AG04449 (cell line): ENCODE measurements at regions of chr20 and their contacts with region 1.

Region 1: DNA sequence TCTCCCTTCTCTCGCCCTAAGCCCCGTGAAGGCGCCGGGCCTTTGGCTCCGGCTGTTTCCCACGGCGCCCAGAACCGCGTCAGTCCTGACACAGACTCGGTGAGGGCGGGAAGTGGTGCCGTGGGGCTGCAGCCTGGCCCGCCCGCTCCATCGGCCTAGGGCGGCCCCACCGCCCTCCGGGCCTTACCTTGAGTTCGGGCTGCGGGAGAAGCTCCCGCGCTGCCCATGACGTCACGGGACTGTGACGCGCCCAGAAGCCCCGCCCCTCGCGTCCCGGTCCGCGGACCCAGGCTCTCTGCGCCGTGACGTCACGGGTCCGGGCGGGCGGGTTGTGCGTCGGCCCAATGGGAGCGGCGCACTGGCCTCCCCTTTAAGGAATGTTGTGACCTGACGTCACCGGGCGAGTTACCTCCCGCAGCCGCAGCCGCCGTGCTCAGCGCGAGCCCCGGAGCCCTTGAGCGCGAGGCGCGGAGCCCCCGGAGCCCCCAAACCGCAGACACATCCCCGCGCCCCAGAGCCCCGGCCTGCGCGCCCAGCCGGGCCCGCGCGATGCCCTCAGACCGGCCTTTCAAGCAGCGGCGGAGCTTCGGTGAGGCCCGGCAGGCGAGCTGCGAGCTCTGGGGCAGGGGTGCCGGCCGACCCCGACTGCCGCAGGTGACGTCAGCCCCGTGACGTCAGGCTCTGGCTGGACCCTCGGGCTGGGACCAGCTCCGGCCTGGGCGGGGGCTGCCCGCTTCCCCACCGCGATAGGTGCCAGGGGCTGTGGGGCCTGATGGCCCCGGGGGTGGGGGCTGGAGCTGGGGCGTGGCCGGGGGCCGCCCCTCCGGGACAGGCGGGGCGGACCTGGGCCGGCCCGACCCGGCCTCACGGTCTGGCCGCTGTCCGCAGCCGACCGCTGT is at the start of gene MAP1LC3A:
- DNase-seq: peak; percentile 69
- H3K4me3 ChIP-seq: peak within 1 kb of the TSS; percentile 71
- CTCF ChIP-seq: no peak

Region 2: DNA sequence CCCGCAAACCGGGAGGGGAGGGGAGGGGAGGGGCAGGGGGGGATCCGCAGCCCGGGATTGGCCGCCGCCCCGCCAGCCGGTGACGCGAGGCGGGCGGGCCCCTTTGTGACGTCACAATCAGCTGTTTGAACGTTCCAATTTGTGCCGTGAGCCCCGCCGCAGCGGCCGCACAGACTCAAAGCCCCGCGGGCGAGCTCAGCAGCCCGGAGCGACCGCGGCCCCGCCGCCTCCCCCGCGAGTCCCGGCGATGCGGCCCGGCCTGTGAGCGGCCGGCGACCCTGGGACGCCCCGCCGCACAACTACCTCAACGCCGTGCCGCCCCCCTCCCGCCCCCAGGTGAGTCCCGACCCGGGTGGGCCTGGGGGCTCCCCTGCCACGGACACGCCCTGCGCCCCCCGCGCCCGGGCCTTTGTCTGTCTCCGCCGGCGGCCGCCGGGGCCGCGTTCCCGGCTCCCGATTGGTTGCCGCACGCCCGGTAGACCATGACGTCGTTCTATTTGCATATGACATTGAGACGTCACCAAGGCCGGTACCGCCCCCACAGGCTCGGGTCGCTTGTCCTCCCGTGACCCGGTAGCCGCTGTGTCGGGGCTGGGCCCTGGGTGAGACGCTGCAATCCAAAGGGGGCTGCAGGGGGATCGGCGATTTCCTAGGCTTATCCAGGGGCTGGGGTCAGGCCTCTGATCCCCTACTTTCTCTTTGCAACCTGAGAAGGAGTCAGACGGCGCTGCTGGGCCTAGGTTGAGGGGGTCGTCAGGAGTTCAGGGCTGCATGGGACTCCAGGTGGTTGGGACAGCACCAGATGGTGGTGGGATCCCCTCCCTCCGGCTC is 145.8 kb after region 1 on chr20 and contains the start of gene TP53INP2:
- CTCF ChIA-PET with region 1: interaction called, 17 read pairs
- POLR2A ChIA-PET with region 1: interaction called, 5 read pairs
- DNase-seq: peak; percentile 45
- H3K4me3 ChIP-seq: peak within 1 kb of the TSS; percentile 81
- CTCF ChIP-seq: no peak

Region 3: DNA sequence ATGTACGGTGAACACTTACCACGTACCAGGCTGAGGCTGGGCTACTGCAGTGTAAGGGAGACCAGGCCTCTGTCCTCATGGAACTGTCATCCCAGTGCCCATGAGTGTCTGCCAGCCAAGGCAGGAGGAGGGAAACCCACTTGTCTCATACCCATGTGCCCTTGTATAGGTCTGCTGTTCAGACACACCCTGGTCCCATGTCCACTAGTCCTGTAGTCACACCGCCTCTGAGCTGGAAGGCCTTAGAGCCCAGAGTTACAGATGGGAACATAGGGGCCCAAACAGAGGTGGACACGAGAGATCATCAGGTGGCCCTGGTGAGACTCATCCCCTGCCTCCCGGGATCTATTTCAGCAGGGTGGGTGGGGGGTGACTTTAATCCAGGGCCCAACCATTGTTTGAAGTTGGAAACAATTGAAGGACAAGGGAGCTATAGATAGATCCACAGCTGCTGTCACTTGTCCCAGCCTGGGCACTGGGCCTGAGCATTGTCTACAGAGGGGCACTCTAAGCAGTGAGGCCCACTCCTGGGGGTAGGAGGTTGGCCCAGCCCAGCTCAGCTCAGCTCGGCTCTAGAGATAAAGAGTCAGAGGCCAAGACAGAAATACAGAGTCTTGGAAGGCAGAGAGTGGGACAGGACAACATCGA is 411.7 kb after region 1 on chr20:
- CTCF ChIA-PET with region 1: no interaction called
- POLR2A ChIA-PET with region 1: no interaction called
- DNase-seq: no peak
- H3K4me3 ChIP-seq: no peak overlapping the region
- CTCF ChIP-seq: no peak

Region 4: DNA sequence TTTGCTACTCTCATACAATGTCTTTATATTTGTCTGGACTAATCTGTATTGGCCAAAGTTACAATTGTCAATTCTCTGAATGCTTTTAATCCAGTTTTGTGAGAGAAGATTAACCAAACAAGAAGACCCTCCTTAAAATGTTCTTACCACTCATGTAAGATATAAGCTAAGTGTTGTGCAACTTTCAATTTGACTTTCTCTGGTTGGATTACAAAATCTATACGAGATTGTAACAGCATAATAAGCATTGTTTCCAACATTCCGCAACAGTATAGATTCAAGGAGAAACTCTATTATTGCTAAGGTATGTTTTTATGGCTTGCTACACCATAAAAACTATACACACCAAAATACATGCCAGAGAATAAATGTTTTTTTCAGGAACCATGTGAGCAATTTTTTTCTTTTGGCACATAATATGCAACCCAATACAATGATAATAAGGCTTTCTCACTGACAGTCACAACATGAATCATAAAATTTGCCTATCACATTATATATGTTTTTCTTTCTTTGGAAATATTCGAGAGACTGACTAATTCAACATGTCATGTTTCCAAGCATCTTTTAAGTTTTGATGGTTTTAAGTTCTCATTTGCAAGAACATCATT is 546.2 kb after region 1 on chr20:
- CTCF ChIA-PET with region 1: no interaction called
- POLR2A ChIA-PET with region 1: no interaction called
- DNase-seq: no peak
- H3K4me3 ChIP-seq: no peak overlapping the region
- CTCF ChIP-seq: no peak

Region 5: GRCh38 chr20:35165221-35166185 is 606.9 kb after region 1 on chr20:
- CTCF ChIA-PET with region 1: no interaction called
- POLR2A ChIA-PET with region 1: no interaction called
- DNase-seq: no peak
- H3K4me3 ChIP-seq: no peak overlapping the region
- CTCF ChIP-seq: no peak